CD8-positive, alpha-beta T cell (primary cell): ENCODE measurements at regions of chr2 and their contacts with region 1.

Region 1: GRCh38 chr2:69724540-69725159 is 17.3 kb upstream of the ANXA4 start:
- DNase-seq: peak; percentile 61 to 90 (median 84)
- ATAC-seq: peak; percentile 88
- H3K4me3 ChIP-seq: no peak overlapping the region
- H3K4me3 Mint-ChIP-seq: peak overlapping the region; percentile 52
- H3K27ac ChIP-seq: no peak overlapping the region
- H3K27ac Mint-ChIP-seq: no peak overlapping the region
- H3K4me1 ChIP-seq: peaks cover 4% of the 10 kb centered on the region
- H3K4me1 Mint-ChIP-seq: peaks cover 6% of the 10 kb centered on the region
- H3K27me3 ChIP-seq: no peaks in the 10 kb centered on the region
- H3K27me3 Mint-ChIP-seq: no peaks in the 10 kb centered on the region
- CTCF ChIP-seq: peak; percentile 97

Region 2: DNA sequence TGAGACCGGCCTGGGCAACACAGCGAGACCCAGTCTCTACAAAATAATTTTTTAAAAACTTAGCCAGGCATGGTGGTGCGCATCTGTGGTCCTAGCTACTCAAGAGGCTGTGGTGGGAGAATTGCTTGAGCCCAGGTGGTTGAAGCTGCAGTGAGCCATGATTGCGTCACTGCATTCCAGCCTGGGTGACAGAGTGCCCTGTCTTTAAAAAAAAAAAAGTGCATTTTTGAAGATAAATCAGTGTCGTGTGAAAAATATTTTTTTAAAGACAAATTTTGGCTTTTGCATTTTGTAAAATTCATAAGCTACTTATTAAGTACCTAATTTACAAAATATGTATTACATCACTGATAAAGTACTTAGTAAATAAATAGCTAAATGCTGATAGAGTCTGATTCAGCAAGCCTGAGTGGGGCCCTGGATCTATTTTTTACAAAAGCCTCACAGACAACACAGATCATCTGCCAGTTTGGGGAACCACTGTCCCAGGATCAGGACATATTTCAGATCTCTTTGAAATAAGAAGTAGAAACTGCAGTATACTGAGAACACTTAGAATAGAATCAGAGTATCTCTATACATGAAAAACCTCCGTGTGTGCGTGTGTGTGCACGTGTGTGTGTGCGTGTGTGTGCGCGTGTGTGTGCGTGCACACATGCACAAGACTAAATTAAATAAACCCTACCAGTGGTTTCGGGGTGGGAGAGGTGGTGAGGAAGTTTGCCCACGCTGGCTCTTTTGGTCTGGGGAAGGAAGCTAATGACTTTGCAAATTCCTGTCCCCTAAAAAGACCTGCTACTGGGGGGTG is 142.7 kb before region 1 on chr2:
- CTCF ChIA-PET with region 1: interaction called, 33 read pairs
- POLR2A ChIA-PET with region 1: no interaction called
- intact Hi-C with region 1: no loop called
- DNase-seq: peak in 3 of 9 experiments; percentile 20 to 49 (median 47)
- ATAC-seq: no peak
- H3K4me3 ChIP-seq: no peak overlapping the region
- H3K4me3 Mint-ChIP-seq: peak overlapping the region; percentile 44
- H3K27ac ChIP-seq: peak overlapping the region in 1 of 2 experiments; percentile 4
- H3K27ac Mint-ChIP-seq: peak overlapping the region; percentile 82
- H3K4me1 ChIP-seq: peaks cover 95% of the 10 kb centered on the region
- H3K4me1 Mint-ChIP-seq: peaks cover 89% of the 10 kb centered on the region
- H3K27me3 ChIP-seq: no peaks in the 10 kb centered on the region
- H3K27me3 Mint-ChIP-seq: no peaks in the 10 kb centered on the region
- CTCF ChIP-seq: no peak

Region 3: GRCh38 chr2:69660637-69661036 is 64.0 kb before region 1 on chr2:
- CTCF ChIA-PET with region 1: interaction called, 11 read pairs
- POLR2A ChIA-PET with region 1: no interaction called
- intact Hi-C with region 1: no loop called
- DNase-seq: no peak
- ATAC-seq: no peak
- H3K4me3 ChIP-seq: no peak overlapping the region
- H3K4me3 Mint-ChIP-seq: no peak overlapping the region
- H3K27ac ChIP-seq: no peak overlapping the region
- H3K27ac Mint-ChIP-seq: no peak overlapping the region
- H3K4me1 ChIP-seq: no peaks in the 10 kb centered on the region
- H3K4me1 Mint-ChIP-seq: peaks cover 20% of the 10 kb centered on the region
- H3K27me3 ChIP-seq: no peaks in the 10 kb centered on the region
- H3K27me3 Mint-ChIP-seq: no peaks in the 10 kb centered on the region
- CTCF ChIP-seq: no peak

Region 4: GRCh38 chr2:69753659-69754363 is 29.2 kb after region 1 on chr2:
- CTCF ChIA-PET with region 1: interaction called, 13 read pairs
- POLR2A ChIA-PET with region 1: no interaction called
- intact Hi-C with region 1: no loop called
- DNase-seq: no peak
- ATAC-seq: no peak
- H3K4me3 ChIP-seq: no peak overlapping the region
- H3K4me3 Mint-ChIP-seq: no peak overlapping the region
- H3K27ac ChIP-seq: no peak overlapping the region
- H3K27ac Mint-ChIP-seq: no peak overlapping the region
- H3K4me1 ChIP-seq: no peaks in the 10 kb centered on the region
- H3K4me1 Mint-ChIP-seq: peaks cover 4% of the 10 kb centered on the region
- H3K27me3 ChIP-seq: no peaks in the 10 kb centered on the region
- H3K27me3 Mint-ChIP-seq: no peaks in the 10 kb centered on the region
- CTCF ChIP-seq: no peak

Region 5: GRCh38 chr2:69829256-69830046 is 104.8 kb after region 1 on chr2 and contains the start of gene GMCL1:
- CTCF ChIA-PET with region 1: interaction called, 23 read pairs
- POLR2A ChIA-PET with region 1: interaction called, 5 read pairs
- intact Hi-C with region 1: no loop called
- DNase-seq: peak; percentile 96 to 100 (median 99)
- ATAC-seq: peak; percentile 94
- H3K4me3 ChIP-seq: peak within 1 kb of the TSS; percentile 70 to 75
- H3K4me3 Mint-ChIP-seq: peak within 1 kb of the TSS; percentile 96
- H3K27ac ChIP-seq: peak within 1 kb of the TSS; percentile 89 to 95
- H3K27ac Mint-ChIP-seq: peak within 1 kb of the TSS; percentile 96
- H3K4me1 ChIP-seq: peaks cover 36% of the 10 kb centered on the region
- H3K4me1 Mint-ChIP-seq: peaks cover 54% of the 10 kb centered on the region
- H3K27me3 ChIP-seq: no peaks in the 10 kb centered on the region
- H3K27me3 Mint-ChIP-seq: no peaks in the 10 kb centered on the region
- CTCF ChIP-seq: no peak
- total RNA-seq, gene GMCL1: 37.1 to 41.4 TPM